GM12878 (cell line): ENCODE measurements at regions of chr5 and their contacts with region 1.

Region 1: GRCh38 chr5:36690041-36690961 is 83.9 kb downstream of the SLC1A3 start:
- DNase-seq: peak; percentile 42
- ATAC-seq: peak; percentile 84
- H3K4me3 ChIP-seq: peak overlapping the region; percentile 83
- H3K27ac ChIP-seq: peak overlapping the region; percentile 55
- H3K4me1 ChIP-seq: peaks cover 19% of the 10 kb centered on the region
- H3K27me3 ChIP-seq: no peaks in the 10 kb centered on the region
- CTCF ChIP-seq: peak; percentile 89 to 95 (median 90)
- EP300 ChIP-seq: no peak
- POLR2A ChIP-seq: peak; percentile 68
- RAD21 ChIP-seq: peak; percentile 53

Region 2: GRCh38 chr5:36073595-36074216 is 616.6 kb before region 1 on chr5:
- CTCF ChIA-PET with region 1: interaction called, 7 read pairs
- POLR2A ChIA-PET with region 1: no interaction called
- RAD21 ChIA-PET with region 1: interaction called, 3 read pairs
- SMC1A ChIA-PET with region 1: no interaction called
- in situ Hi-C with region 1: no loop called
- intact Hi-C with region 1: loop called (anchors 5 kb)
- DNase-seq: no peak
- ATAC-seq: peak; percentile 83
- H3K4me3 ChIP-seq: no peak overlapping the region
- H3K27ac ChIP-seq: no peak overlapping the region
- H3K4me1 ChIP-seq: no peaks in the 10 kb centered on the region
- H3K27me3 ChIP-seq: no peaks in the 10 kb centered on the region
- CTCF ChIP-seq: peak; percentile 39 to 64 (median 40); a peak in 5 of 6 replicates
- EP300 ChIP-seq: no peak
- POLR2A ChIP-seq: no peak
- RAD21 ChIP-seq: peak; percentile 43; the same call in 1 of the 2 replicates

Region 3: GRCh38 chr5:36241631-36242533 is 448.4 kb before region 1 on chr5 and contains the start of gene NADK2:
- CTCF ChIA-PET with region 1: interaction called, 6 read pairs
- POLR2A ChIA-PET with region 1: interaction called, 3 read pairs
- RAD21 ChIA-PET with region 1: no interaction called
- SMC1A ChIA-PET with region 1: interaction called, 3 read pairs
- in situ Hi-C with region 1: loop called (anchors 10 kb)
- intact Hi-C with region 1: loop called (anchors 5 kb)
- DNase-seq: peak; percentile 61
- ATAC-seq: peak; percentile 92
- H3K4me3 ChIP-seq: peak within 1 kb of the TSS; percentile 97
- H3K27ac ChIP-seq: peak within 1 kb of the TSS; percentile 59
- H3K4me1 ChIP-seq: peaks cover 19% of the 10 kb centered on the region
- H3K27me3 ChIP-seq: no peaks in the 10 kb centered on the region
- CTCF ChIP-seq: peak; percentile 69 to 74 (median 73)
- EP300 ChIP-seq: no peak
- POLR2A ChIP-seq: peak; percentile 71
- RAD21 ChIP-seq: peak; percentile 40; the same call in 1 of the 2 replicates
- polyA plus RNA-seq, gene NADK2: 2.4 to 3.1 TPM

Region 4: DNA sequence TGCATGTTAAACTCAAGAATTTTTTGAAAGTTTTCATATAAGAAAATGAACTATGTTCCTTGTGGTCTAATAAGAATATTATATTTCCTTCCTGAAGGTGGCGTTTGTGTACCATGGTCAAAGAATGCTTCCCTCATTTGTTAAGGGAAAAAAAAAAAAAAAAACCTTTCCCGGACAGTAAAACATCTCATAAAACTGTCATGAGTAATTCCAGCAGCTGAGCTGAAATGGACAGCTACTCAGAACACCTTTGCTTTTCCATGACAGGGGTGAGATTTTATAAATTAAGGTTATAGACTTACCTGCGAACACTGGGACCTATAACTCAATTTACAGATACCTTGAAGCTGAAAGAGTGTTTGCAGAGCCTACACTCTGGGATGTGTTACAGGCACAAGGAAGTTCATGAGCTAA is 275.4 kb before region 1 on chr5:
- CTCF ChIA-PET with region 1: interaction called, 25 read pairs
- POLR2A ChIA-PET with region 1: no interaction called
- RAD21 ChIA-PET with region 1: interaction called, 6 read pairs
- SMC1A ChIA-PET with region 1: interaction called, 10 read pairs
- in situ Hi-C with region 1: loop called (anchors 5 kb)
- intact Hi-C with region 1: loop called (anchors 1 kb)
- DNase-seq: no peak
- ATAC-seq: no peak
- H3K4me3 ChIP-seq: no peak overlapping the region
- H3K27ac ChIP-seq: no peak overlapping the region
- H3K4me1 ChIP-seq: no peaks in the 10 kb centered on the region
- H3K27me3 ChIP-seq: no peaks in the 10 kb centered on the region
- CTCF ChIP-seq: peak in 2 of 3 experiments; percentile 19 to 44; a peak in 3 of 6 replicates
- EP300 ChIP-seq: no peak
- POLR2A ChIP-seq: no peak
- RAD21 ChIP-seq: peak; percentile 60

Region 5: GRCh38 chr5:36535378-36535777 is 154.9 kb before region 1 on chr5:
- CTCF ChIA-PET with region 1: no interaction called
- POLR2A ChIA-PET with region 1: no interaction called
- RAD21 ChIA-PET with region 1: interaction called, 3 read pairs
- SMC1A ChIA-PET with region 1: no interaction called
- in situ Hi-C with region 1: no loop called
- intact Hi-C with region 1: loop called (anchors 10 kb)
- DNase-seq: no peak
- ATAC-seq: no peak
- H3K4me3 ChIP-seq: no peak overlapping the region
- H3K27ac ChIP-seq: no peak overlapping the region
- H3K4me1 ChIP-seq: no peaks in the 10 kb centered on the region
- H3K27me3 ChIP-seq: peaks cover 0 to 2% of the 10 kb centered on the region in 2 experiments; a peak in 2 of 4 replicates
- CTCF ChIP-seq: no peak
- EP300 ChIP-seq: no peak
- POLR2A ChIP-seq: no peak
- RAD21 ChIP-seq: no peak

Region 6: DNA sequence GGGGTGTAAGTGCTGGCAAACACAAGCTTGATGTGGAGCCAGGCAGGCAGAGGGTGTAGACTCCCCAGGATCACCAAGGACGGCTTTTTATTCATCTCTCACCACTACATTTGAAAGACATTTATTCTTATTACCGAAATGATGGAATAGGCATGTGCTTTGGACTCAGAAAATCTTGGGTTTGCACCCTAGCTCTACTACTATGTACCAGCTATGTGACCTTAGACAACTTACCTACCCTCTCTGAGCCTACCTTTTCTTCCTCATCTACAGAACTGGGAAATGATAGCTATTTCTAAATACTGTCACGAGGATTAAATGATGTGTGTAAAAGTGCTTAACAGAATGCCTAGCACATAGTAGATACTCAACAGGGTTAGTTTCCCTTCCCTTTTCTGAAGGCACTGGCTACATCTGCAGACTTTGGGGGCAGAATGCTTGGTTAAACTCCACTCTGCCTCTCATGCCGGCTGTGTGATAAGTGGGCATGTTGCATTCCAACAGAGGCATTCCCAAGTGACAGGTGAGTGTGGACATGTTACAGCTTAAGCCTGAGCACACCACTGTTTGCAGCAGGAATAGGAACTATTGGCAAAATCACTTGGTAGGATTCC is 10.9 kb after region 1 on chr5:
- CTCF ChIA-PET with region 1: interaction called, 38 read pairs
- POLR2A ChIA-PET with region 1: interaction called, 6 read pairs
- RAD21 ChIA-PET with region 1: interaction called, 18 read pairs
- SMC1A ChIA-PET with region 1: interaction called, 23 read pairs
- in situ Hi-C with region 1: no loop called
- intact Hi-C with region 1: no loop called
- DNase-seq: peak; percentile 55
- ATAC-seq: peak; percentile 98
- H3K4me3 ChIP-seq: no peak overlapping the region
- H3K27ac ChIP-seq: peak overlapping the region; percentile 46
- H3K4me1 ChIP-seq: peaks cover 23% of the 10 kb centered on the region
- H3K27me3 ChIP-seq: no peaks in the 10 kb centered on the region
- CTCF ChIP-seq: no peak
- EP300 ChIP-seq: peak in 1 of 2 experiments; percentile 58; a peak in 2 of 4 replicates
- POLR2A ChIP-seq: no peak
- RAD21 ChIP-seq: no peak

Region 7: DNA sequence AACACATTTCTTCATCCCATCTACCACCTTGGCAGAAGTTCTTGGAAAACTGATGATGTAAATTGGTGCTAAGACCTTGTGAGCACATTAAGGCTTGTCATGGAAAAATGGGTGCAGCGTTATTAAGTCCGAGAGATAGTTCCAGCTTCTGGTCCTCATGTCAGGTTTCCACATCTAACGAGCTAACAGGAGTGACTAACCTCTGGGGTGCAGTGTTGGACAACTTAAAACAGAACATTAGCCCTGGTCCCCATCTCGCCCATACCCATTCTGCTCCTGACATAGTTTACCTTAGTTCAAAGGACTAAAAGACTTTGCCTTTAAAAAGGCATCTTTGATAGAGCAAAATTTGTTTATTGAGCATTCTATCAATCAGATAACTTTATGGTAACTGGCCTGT is 44.1 kb after region 1 on chr5:
- CTCF ChIA-PET with region 1: interaction called, 55 read pairs
- POLR2A ChIA-PET with region 1: no interaction called
- RAD21 ChIA-PET with region 1: interaction called, 10 read pairs
- SMC1A ChIA-PET with region 1: interaction called, 14 read pairs
- in situ Hi-C with region 1: no loop called
- intact Hi-C with region 1: no loop called
- DNase-seq: no peak
- ATAC-seq: peak; percentile 80
- H3K4me3 ChIP-seq: no peak overlapping the region
- H3K27ac ChIP-seq: no peak overlapping the region
- H3K4me1 ChIP-seq: no peaks in the 10 kb centered on the region
- H3K27me3 ChIP-seq: no peaks in the 10 kb centered on the region
- CTCF ChIP-seq: peak in 2 of 3 experiments; percentile 6 to 50; a peak in 3 of 6 replicates
- EP300 ChIP-seq: no peak
- POLR2A ChIP-seq: no peak
- RAD21 ChIP-seq: peak; percentile 51